ENCODE measurements at regions of chr4 and their contacts with region 1.

Region 1: GRCh38 chr4:119238068-119238722 is 25.7 kb downstream of the USP53 start:
- DNase-seq: peak; percentile 24
- H3K4me3 Mint-ChIP-seq: no peak overlapping the region
- H3K27ac Mint-ChIP-seq: peak overlapping the region; percentile 87
- H3K4me1 Mint-ChIP-seq: peaks cover 36% of the 10 kb centered on the region
- H3K27me3 Mint-ChIP-seq: no peaks in the 10 kb centered on the region

Region 2: GRCh38 chr4:119197772-119198212 is 40.4 kb before region 1 on chr4:
- intact Hi-C with region 1: no loop called
- DNase-seq: no peak
- H3K4me3 Mint-ChIP-seq: no peak overlapping the region
- H3K27ac Mint-ChIP-seq: no peak overlapping the region
- H3K4me1 Mint-ChIP-seq: peaks cover 2% of the 10 kb centered on the region
- H3K27me3 Mint-ChIP-seq: peaks cover 8% of the 10 kb centered on the region

Region 3: GRCh38 chr4:119212234-119212963 is 25.8 kb before region 1 on chr4 and contains the start of gene USP53:
- intact Hi-C with region 1: loop called (anchors 1 kb)
- DNase-seq: peak; percentile 93
- H3K4me3 Mint-ChIP-seq: peak within 1 kb of the TSS; percentile 91
- H3K27ac Mint-ChIP-seq: peak within 1 kb of the TSS; percentile 88
- H3K4me1 Mint-ChIP-seq: peaks cover 33% of the 10 kb centered on the region
- H3K27me3 Mint-ChIP-seq: peaks cover 8% of the 10 kb centered on the region
- total RNA-seq, gene USP53: 6.6 and 7.3 TPM in 2 replicates